Activated CD8-positive, alpha-beta T cell treated with anti-CD3 and anti-CD28 coated beads, Interleukin-2, amount 10 ng/mL, durations not matched to agents 7 days and 5 days (primary cell): ENCODE measurements at regions of chr9 and their contacts with region 1.

Region 1: GRCh38 chr9:95726756-95727155 is 148.7 kb upstream of the ERCC6L2 start:
- DNase-seq: no peak
- ATAC-seq: no peak
- H3K4me3 Mint-ChIP-seq: no peak overlapping the region
- H3K27ac Mint-ChIP-seq: no peak overlapping the region
- H3K4me1 Mint-ChIP-seq: peaks cover 46% of the 10 kb centered on the region
- H3K27me3 Mint-ChIP-seq: peaks cover 14% of the 10 kb centered on the region

Region 2: DNA sequence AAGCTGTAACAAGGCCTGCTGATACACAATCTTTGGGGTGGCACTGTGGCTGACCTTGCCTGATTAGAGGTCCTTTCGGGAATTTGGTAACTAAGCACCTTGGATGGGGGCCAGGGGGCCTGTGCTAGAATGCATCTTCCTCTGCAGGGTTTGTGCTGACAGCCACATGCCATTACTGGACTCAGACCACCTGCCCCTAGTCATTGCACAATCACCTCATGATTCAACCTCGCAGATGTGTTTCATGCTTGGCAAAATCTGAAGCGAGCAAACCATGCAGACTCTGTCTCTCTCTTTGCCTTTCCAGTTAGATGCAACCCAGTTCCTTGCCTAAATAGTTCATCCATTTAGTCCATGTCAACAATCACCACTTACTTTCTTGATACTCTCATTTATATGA is 52.2 kb after region 1 on chr9:
- CTCF ChIA-PET with region 1: no interaction called
- POLR2A ChIA-PET with region 1: no interaction called
- DNase-seq: no peak
- ATAC-seq: no peak
- H3K4me3 Mint-ChIP-seq: no peak overlapping the region
- H3K27ac Mint-ChIP-seq: no peak overlapping the region
- H3K4me1 Mint-ChIP-seq: no peaks in the 10 kb centered on the region
- H3K27me3 Mint-ChIP-seq: peaks cover 49% of the 10 kb centered on the region

Region 3: DNA sequence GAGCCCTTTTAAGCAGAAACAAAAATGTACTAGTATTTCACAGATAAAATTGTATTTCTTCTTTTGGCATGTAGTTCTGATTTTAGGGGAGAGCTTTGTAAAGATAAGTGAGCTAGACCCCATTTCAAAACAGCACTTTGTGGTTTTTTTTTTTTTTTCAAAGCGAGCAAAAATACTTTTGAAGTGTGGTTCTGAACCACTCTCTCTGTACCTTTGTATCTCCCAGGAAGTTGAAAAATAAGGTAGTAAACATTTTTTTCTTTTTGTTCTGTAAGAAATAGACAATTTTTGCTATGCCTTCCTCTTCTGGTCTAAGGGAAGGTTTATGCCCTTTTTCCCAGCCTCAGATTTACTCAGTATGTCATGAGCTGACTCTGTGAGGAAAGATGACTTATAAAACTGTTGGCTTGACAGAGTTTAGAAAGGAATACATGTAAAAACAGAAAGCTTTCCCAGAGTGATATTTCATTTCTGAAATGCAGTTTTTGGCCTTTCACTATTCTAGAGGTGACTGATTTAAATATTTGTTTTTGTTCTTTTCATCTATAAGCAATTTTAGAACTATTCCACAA is 161.3 kb after region 1 on chr9:
- CTCF ChIA-PET with region 1: no interaction called
- POLR2A ChIA-PET with region 1: no interaction called
- DNase-seq: no peak
- ATAC-seq: peak; percentile 70
- H3K4me3 Mint-ChIP-seq: peak overlapping the region; percentile 67
- H3K27ac Mint-ChIP-seq: peak overlapping the region; percentile 80
- H3K4me1 Mint-ChIP-seq: peaks cover 62% of the 10 kb centered on the region
- H3K27me3 Mint-ChIP-seq: no peaks in the 10 kb centered on the region

Region 4: GRCh38 chr9:96217754-96218693 is 491.3 kb after region 1 on chr9:
- CTCF ChIA-PET with region 1: interaction called, 11 read pairs
- POLR2A ChIA-PET with region 1: no interaction called
- DNase-seq: peak; percentile 80
- ATAC-seq: peak; percentile 96
- H3K4me3 Mint-ChIP-seq: peak overlapping the region; percentile 64
- H3K27ac Mint-ChIP-seq: no peak overlapping the region
- H3K4me1 Mint-ChIP-seq: peaks cover 13% of the 10 kb centered on the region
- H3K27me3 Mint-ChIP-seq: peaks cover 59% of the 10 kb centered on the region